PC-9 (cell line): ENCODE measurements at regions of chr3 and their contacts with region 1.

Region 1: DNA sequence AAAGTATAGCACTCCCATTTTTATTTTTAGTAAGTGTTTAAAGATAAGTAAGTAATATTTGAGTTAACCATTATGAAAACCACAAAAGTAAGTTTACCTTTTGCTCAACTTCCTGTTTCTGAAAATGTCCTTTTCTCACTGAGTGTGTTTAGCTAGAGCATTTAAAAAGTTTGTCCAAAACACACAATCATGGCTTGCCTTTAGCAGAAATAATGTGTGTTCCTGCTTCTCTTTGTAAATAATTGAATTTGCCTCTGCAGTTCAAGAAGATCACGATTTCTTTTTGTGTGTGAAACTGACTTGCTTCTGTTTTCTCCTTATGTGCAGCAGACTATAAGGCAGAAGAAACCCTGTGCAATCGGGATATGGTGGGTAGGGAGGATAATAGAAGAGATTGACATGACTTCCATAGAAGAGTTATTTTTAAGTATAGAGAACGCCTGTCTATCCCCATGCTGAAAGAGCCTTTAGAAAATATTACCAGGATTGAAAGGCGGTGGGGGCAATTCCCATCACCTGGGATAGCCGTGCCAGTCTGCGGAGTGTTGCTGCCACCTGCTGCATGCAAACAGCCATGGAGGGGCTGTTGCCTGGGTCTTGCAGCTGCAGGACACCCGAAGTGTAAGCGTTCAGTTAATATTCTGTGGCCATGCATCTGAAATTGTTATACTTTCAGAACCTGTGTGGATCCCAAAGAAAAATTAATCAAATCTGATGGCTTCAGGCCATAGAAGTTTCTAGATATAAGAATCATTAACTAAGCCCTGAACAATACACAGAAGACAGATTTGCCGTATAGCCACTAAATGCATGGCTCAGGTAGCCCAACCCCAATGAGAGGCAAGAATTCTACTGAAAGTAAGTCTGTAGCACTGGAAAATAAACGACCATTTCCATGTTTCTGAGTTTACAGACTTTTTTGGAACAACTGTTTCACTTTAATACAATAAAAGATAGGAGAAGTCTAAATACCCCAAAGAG is 2.4 kb upstream of the CD96 start:
- DNase-seq: peak in 1 of 2 experiments; percentile 65
- H3K4me3 ChIP-seq: peak overlapping the region; percentile 4
- H3K27ac ChIP-seq: peak overlapping the region; percentile 33
- H3K4me1 ChIP-seq: peaks cover 33% of the 10 kb centered on the region
- H3K27me3 ChIP-seq: no peaks in the 10 kb centered on the region
- CTCF ChIP-seq: peak; percentile 79

Region 2: DNA sequence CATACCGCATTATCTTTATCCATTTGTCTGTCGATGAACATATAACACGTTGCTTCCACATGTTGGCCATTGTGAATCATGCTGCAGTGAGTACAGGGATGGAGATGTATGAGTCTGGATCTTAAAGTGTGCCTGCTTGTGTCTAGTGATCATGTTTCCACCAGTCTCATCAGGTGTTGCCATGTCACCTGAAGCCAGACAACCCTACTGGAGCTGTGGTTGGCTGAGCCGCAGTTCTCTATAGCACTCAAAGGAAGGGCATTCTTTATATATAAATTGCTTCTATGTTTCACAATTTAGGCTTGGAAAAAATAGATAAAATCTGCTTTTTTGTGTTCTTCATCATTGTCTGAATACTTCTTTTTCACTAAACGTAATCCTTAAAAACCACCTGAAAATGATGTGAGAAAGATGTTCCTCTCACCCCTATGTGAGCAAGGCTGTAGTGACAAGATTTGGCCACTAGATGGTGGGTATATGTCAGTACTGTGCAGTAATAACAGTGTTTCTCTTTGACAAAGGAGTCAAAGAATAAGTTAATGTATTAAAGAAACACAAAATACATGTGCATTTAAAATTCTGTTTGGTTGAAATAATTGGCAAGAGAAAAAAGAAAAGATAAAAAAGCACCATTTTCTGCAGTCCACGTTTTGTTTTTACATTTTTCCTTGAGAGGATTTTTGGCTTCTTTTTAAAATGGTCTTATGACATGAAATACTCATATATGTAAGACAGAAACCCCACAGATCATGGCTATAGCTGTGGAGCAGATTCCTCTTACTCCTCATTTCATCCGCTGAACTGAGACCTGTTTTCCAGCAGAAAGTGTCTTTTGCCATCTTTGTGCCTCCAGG is 1807.8 kb before region 1 on chr3:
- CTCF ChIA-PET with region 1: no interaction called
- POLR2A ChIA-PET with region 1: no interaction called
- intact Hi-C with region 1: loop called (anchors 2 kb)
- DNase-seq: peak in 1 of 2 experiments; percentile 32
- H3K4me3 ChIP-seq: no peak overlapping the region
- H3K27ac ChIP-seq: no peak overlapping the region
- H3K4me1 ChIP-seq: no peaks in the 10 kb centered on the region
- H3K27me3 ChIP-seq: no peaks in the 10 kb centered on the region
- CTCF ChIP-seq: peak; percentile 100

Region 3: GRCh38 chr3:111260878-111261277 is 278.8 kb before region 1 on chr3:
- CTCF ChIA-PET with region 1: no interaction called
- POLR2A ChIA-PET with region 1: no interaction called
- intact Hi-C with region 1: loop called (anchors 10 kb)
- DNase-seq: no peak
- H3K4me3 ChIP-seq: no peak overlapping the region
- H3K27ac ChIP-seq: no peak overlapping the region
- H3K4me1 ChIP-seq: no peaks in the 10 kb centered on the region
- H3K27me3 ChIP-seq: no peaks in the 10 kb centered on the region
- CTCF ChIP-seq: no peak

Region 4: DNA sequence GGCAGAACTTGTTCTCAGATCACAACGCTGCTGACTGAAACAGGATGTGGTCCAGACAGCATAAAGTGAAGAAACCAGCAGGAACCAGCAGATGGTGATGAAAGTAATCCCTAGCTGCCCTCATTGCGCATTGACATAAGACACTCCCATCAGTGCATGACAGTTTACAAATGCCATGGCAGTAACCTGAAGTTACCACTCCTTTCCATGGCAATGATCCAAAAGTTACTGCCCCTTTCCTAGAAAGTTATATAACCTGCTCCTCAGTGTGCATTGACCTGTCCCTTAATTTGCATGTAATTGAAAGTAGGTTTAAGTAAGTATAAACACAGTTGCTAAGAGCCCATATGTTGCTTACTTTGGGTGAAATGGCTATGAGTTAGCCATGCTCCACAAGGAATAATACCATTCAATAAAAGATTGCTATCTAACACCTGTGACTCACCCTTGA is 146.7 kb before region 1 on chr3:
- CTCF ChIA-PET with region 1: no interaction called
- POLR2A ChIA-PET with region 1: no interaction called
- intact Hi-C with region 1: loop called (anchors 2 kb)
- DNase-seq: peak; percentile 61 to 73
- H3K4me3 ChIP-seq: no peak overlapping the region
- H3K27ac ChIP-seq: no peak overlapping the region
- H3K4me1 ChIP-seq: peaks cover 16% of the 10 kb centered on the region
- H3K27me3 ChIP-seq: no peaks in the 10 kb centered on the region
- CTCF ChIP-seq: no peak

Region 5: GRCh38 chr3:111668912-111669488 is 129.4 kb after region 1 on chr3:
- CTCF ChIA-PET with region 1: no interaction called
- POLR2A ChIA-PET with region 1: no interaction called
- intact Hi-C with region 1: no loop called
- DNase-seq: peak; percentile 16 to 78
- H3K4me3 ChIP-seq: no peak overlapping the region
- H3K27ac ChIP-seq: no peak overlapping the region
- H3K4me1 ChIP-seq: peaks cover 25% of the 10 kb centered on the region
- H3K27me3 ChIP-seq: no peaks in the 10 kb centered on the region
- CTCF ChIP-seq: peak; percentile 98